Astrocyte of the cerebellum (primary cell): ENCODE measurements at regions of chr10 and their contacts with region 1.

Region 1: GRCh38 chr10:76036111-76036940 is 604.9 kb downstream of the LRMDA start:
- DNase-seq: peak; percentile 62
- H3K4me3 ChIP-seq: no peak overlapping the region
- CTCF ChIP-seq: peak; percentile 92

Region 2: DNA sequence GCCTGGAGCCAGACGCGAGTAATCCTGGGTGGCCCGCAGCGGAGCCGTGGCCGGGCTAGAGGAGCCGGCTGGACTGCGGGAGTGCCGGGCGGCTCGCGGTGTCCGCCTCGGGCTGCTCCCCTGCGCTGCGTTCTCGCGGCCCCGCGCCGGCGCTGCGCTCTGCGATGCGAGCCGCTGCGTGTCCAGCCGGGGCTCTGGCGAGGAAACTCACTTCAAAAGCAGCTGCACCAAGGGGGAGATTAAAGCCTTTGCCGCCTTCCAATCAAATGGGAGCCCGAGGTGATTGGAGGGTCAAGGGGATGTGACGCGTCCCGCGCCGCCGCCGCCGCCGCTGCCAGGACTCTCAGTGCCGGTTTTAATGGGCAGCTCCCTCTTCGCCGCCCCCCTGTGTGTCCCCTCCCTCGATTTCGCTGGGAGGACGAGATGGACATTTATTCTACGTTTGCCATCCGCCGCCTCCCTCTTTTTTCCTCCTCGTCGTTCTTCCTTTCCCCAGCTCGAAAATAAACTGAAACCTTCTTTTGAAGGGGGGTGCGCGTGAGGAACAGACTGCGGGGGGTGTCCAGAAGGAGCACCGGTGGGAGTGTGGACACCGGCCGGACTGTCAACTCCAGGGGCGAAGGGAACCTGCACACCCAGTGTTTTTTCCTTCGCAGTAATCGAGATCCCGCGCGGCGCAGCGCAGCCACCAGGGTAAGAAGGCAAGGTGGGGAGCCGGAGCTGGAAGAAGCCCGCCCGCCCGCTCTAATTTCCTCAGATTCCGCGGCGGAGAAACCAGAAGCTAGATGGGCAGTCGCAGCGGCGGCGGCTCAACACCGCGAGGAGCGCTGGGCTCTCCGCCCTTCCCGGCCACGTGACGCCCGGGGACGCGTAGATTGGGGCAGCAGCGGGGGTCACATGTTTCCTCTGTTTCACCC is 634.5 kb before region 1 on chr10 and contains the start of gene ZNF503:
- in situ Hi-C with region 1: loop called (anchors 10 kb)
- DNase-seq: peak; percentile 96
- H3K4me3 ChIP-seq: peak within 1 kb of the TSS; percentile 100
- CTCF ChIP-seq: no peak